T-cell (primary cell): ENCODE measurements at regions of chr4 and their contacts with region 1.

Region 1: GRCh38 chr4:40283968-40284367 is 51.2 kb upstream of the CHRNA9 start:
- DNase-seq: peak in 34 of 35 experiments; percentile 62 to 89 (median 74)
- ATAC-seq: peak; percentile 97 to 99 (median 98)
- H3K4me3 ChIP-seq: peak overlapping the region in 1 of 2 donors; percentile 5
- H3K4me3 Mint-ChIP-seq: peak overlapping the region in 2 of 3 donors; percentile 43 to 78
- H3K27ac ChIP-seq: peak overlapping the region; percentile 90
- H3K27ac Mint-ChIP-seq: peak overlapping the region; percentile 89 to 94
- H3K4me1 ChIP-seq: peaks cover 20 to 58% of the 10 kb centered on the region in 2 experiments
- H3K4me1 Mint-ChIP-seq: peaks cover 57 to 73% (median 70%) of the 10 kb centered on the region in 3 donors
- H3K27me3 ChIP-seq: no peaks in the 10 kb centered on the region
- H3K27me3 Mint-ChIP-seq: no peaks in the 10 kb centered on the region

Region 2: GRCh38 chr4:40178672-40179071 is 105.3 kb before region 1 on chr4:
- CTCF ChIA-PET with region 1: no interaction called
- POLR2A ChIA-PET with region 1: no interaction called
- DNase-seq: no peak
- ATAC-seq: no peak
- H3K4me3 ChIP-seq: no peak overlapping the region
- H3K4me3 Mint-ChIP-seq: no peak overlapping the region
- H3K27ac ChIP-seq: no peak overlapping the region
- H3K27ac Mint-ChIP-seq: peak overlapping the region in 1 of 2 donors; percentile 79
- H3K4me1 ChIP-seq: peaks cover under 1 to 7% of the 10 kb centered on the region in 2 experiments
- H3K4me1 Mint-ChIP-seq: peaks cover 24 to 31% (median 29%) of the 10 kb centered on the region in 3 donors
- H3K27me3 ChIP-seq: no peaks in the 10 kb centered on the region
- H3K27me3 Mint-ChIP-seq: no peaks in the 10 kb centered on the region

Region 3: DNA sequence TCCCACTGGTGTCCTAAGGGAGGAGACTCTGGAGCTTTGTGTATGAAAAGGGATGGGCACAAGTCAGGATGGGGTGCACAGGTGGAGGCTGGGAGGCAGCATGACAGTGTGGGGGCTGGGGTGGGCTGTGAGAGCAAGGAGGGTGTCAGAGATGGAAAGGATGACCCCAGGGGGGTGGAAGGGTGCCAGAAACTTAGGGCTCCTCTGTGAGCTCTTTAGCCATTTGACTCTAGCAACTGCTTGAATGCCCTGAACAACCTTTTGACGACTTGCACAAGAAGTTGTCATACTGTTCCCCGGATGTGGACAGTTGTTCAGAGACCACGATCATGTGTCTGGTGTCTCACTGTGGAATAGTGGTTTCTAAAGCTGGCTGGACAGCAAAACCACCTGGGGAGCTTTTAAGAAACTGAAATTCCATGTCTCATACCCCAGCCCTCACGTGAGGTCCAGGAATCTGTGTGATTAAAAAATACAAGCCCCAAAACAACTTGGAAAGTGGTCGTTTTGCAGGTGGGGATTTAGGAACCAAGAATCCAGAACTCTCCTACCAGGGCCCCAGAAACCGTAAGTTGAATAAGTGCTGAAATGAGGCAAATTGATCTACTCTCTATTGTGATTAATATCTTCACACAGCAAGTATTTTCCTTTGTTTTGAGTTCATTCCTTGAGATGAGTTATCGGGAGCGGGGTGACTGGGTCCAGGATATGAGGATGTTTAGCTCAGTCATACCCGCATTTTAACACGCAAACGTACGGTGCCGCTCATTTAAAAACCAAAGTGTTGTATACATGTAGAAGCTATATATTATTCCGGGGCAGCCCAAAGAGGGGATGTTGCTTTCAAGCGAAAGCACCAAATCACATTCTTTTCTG is 83.7 kb before region 1 on chr4:
- CTCF ChIA-PET with region 1: interaction called in 1 of 2 experiments, 3 read pairs
- POLR2A ChIA-PET with region 1: interaction called, 6 to 12 read pairs
- DNase-seq: peak in 24 of 35 experiments; percentile 39 to 78 (median 49)
- ATAC-seq: peak; percentile 16 to 43 (median 35)
- H3K4me3 ChIP-seq: peak overlapping the region; percentile 87 to 96
- H3K4me3 Mint-ChIP-seq: peak overlapping the region; percentile 96 to 99 (median 98)
- H3K27ac ChIP-seq: peak overlapping the region; percentile 99
- H3K27ac Mint-ChIP-seq: peak overlapping the region; percentile 95 to 96
- H3K4me1 ChIP-seq: peaks cover 33 to 48% of the 10 kb centered on the region in 2 experiments
- H3K4me1 Mint-ChIP-seq: peaks cover 40 to 58% (median 52%) of the 10 kb centered on the region in 3 donors
- H3K27me3 ChIP-seq: no peaks in the 10 kb centered on the region
- H3K27me3 Mint-ChIP-seq: no peaks in the 10 kb centered on the region

Region 4: DNA sequence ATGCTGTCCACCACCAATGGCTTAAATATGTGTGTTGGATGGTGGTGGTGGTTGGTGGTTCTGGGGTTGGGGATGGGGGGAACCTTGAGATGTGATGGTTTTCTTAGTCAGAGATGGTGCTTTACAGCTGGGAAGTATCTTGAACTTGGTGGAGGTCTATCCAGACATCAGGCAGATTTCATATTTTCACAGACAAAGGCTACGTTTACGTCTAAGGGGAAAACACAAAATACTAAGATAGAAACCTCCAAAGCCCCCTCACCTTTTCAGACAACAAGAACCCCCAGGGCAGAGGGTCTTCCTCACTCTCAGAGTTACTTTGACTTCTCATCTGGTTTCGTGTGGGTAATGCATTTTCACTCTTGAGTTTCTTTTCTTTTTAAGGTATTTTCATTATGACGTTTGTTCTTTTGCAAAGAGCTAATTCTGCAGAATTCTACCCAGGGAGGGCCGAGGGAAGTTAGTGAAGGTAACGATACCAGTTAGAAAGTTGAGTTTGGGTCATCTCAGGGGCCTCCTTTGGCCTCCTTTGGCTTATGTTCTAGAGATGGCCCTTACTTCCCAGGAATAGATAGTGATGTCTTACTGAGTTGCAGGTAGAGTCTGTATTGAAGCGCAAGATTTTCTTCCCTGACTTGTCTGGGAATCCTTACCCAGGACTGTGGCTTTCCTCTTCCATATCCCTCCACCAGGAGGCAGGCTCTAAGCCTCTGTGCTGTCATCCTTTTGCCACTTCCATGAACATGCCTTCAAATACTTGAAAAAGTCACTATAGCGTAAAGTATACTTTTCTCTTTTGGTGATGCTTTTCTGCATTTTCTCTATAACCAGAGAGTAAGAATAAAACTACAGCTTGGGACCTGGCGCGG is 55.2 kb before region 1 on chr4:
- CTCF ChIA-PET with region 1: interaction called, 4 to 16 read pairs
- POLR2A ChIA-PET with region 1: no interaction called
- DNase-seq: peak in 1 of 35 experiments; percentile 52
- ATAC-seq: no peak
- H3K4me3 ChIP-seq: peak overlapping the region; percentile 15 to 19
- H3K4me3 Mint-ChIP-seq: peak overlapping the region; percentile 68 to 83 (median 76)
- H3K27ac ChIP-seq: peak overlapping the region; percentile 87
- H3K27ac Mint-ChIP-seq: peak overlapping the region; percentile 97 to 99
- H3K4me1 ChIP-seq: peaks cover 76 to 90% of the 10 kb centered on the region in 2 experiments
- H3K4me1 Mint-ChIP-seq: peaks cover 91 to 94% (median 91%) of the 10 kb centered on the region in 3 donors
- H3K27me3 ChIP-seq: no peaks in the 10 kb centered on the region
- H3K27me3 Mint-ChIP-seq: no peaks in the 10 kb centered on the region

Region 5: GRCh38 chr4:40238700-40239548 is 45.0 kb before region 1 on chr4:
- CTCF ChIA-PET with region 1: interaction called in 1 of 2 experiments, 10 read pairs
- POLR2A ChIA-PET with region 1: interaction called in 1 of 2 experiments, 7 read pairs
- DNase-seq: peak in 34 of 35 experiments; percentile 56 to 92 (median 79)
- ATAC-seq: peak; percentile 86 to 94 (median 92)
- H3K4me3 ChIP-seq: peak overlapping the region; percentile 28 to 29
- H3K4me3 Mint-ChIP-seq: peak overlapping the region; percentile 67 to 76 (median 73)
- H3K27ac ChIP-seq: peak overlapping the region; percentile 97
- H3K27ac Mint-ChIP-seq: peak overlapping the region; percentile 93 to 95
- H3K4me1 ChIP-seq: peaks cover 67 to 99% of the 10 kb centered on the region in 2 experiments
- H3K4me1 Mint-ChIP-seq: peaks cover 91 to 95% (median 94%) of the 10 kb centered on the region in 3 donors
- H3K27me3 ChIP-seq: no peaks in the 10 kb centered on the region
- H3K27me3 Mint-ChIP-seq: no peaks in the 10 kb centered on the region

Region 6: DNA sequence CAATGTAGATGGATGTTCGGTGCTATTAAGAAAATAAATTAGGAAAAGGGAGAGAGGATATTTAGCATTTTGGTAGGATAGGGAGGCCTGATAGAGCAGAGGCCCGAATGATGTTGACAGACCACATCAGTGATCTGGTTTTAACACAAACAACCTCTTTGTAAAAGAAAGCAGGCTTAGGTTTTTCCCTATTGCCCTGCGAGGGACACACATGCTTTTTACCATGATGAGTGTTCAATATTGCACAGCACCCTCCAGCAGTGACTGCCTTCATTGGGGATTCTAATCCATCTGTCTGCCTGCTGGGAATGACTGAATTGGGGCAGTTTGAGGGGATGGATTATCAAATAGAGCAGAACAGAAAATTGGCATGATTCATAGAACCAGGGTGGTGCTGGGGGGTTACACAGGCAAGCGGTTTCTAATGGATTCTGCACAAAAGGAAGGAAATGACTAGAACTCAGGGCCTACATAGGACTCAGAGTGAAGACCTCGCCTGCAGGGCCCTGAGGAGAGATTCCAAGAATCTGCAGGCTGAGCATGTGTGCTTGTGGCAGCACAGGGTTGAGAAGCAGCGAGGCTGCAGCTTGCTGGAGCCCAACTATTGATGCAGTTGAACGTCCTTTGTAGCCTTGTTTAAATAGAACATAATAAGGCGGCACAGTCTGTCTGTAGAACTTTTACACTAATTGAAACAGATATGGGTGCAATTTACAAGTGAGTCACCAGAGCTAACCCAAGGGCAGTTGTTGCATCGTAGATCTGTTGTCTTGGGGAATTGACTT is 29.2 kb before region 1 on chr4:
- CTCF ChIA-PET with region 1: interaction called, 8 to 10 read pairs
- POLR2A ChIA-PET with region 1: interaction called in 1 of 2 experiments, 3 read pairs
- DNase-seq: peak in 1 of 35 experiments; percentile 39
- ATAC-seq: peak; percentile 31 to 63 (median 57)
- H3K4me3 ChIP-seq: no peak overlapping the region
- H3K4me3 Mint-ChIP-seq: peak overlapping the region; percentile 1 to 57 (median 55)
- H3K27ac ChIP-seq: peak overlapping the region; percentile 52
- H3K27ac Mint-ChIP-seq: peak overlapping the region; percentile 82 to 97
- H3K4me1 ChIP-seq: peaks cover 43 to 70% of the 10 kb centered on the region in 2 experiments
- H3K4me1 Mint-ChIP-seq: peaks cover 76 to 87% (median 77%) of the 10 kb centered on the region in 3 donors
- H3K27me3 ChIP-seq: no peaks in the 10 kb centered on the region
- H3K27me3 Mint-ChIP-seq: no peaks in the 10 kb centered on the region

Region 7: GRCh38 chr4:40325189-40326019 is 41.4 kb after region 1 on chr4:
- CTCF ChIA-PET with region 1: interaction called, 3 to 11 read pairs
- POLR2A ChIA-PET with region 1: interaction called, 3 to 10 read pairs
- DNase-seq: peak in 33 of 35 experiments; percentile 43 to 87 (median 65)
- ATAC-seq: peak; percentile 96 to 98 (median 97)
- H3K4me3 ChIP-seq: no peak overlapping the region
- H3K4me3 Mint-ChIP-seq: no peak overlapping the region
- H3K27ac ChIP-seq: no peak overlapping the region
- H3K27ac Mint-ChIP-seq: peak overlapping the region; percentile 9 to 14
- H3K4me1 ChIP-seq: peaks cover 4 to 9% of the 10 kb centered on the region in 2 experiments
- H3K4me1 Mint-ChIP-seq: peaks cover 21 to 31% (median 21%) of the 10 kb centered on the region in 3 donors
- H3K27me3 ChIP-seq: no peaks in the 10 kb centered on the region
- H3K27me3 Mint-ChIP-seq: peaks cover 0 to 4% of the 10 kb centered on the region in 2 donors

Region 8: DNA sequence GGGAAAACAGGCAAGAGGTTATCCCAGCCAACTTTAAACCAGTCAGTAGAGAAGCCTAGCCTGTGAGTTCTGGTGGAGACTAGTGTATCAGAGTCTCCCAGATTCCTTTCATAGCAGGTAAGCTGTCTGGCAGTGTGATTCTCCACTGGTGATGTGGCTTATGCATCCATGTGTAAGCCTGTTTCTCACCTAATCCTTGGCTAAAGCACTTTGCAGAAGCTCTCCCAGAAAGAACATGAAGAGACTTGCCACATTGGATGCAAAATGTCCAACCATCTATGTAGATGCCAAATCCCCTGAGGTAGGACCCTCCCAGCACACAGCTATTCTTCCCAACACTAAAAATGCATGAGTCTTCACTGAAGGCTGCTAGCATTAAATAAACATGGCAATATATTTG is 162.9 kb after region 1 on chr4:
- CTCF ChIA-PET with region 1: interaction called in 1 of 2 experiments, 10 read pairs
- POLR2A ChIA-PET with region 1: no interaction called
- DNase-seq: no peak
- ATAC-seq: no peak
- H3K4me3 ChIP-seq: no peak overlapping the region
- H3K4me3 Mint-ChIP-seq: no peak overlapping the region
- H3K27ac ChIP-seq: no peak overlapping the region
- H3K27ac Mint-ChIP-seq: no peak overlapping the region
- H3K4me1 ChIP-seq: peaks cover 0 to under 1% of the 10 kb centered on the region in 2 experiments
- H3K4me1 Mint-ChIP-seq: peaks cover 3 to 17% (median 13%) of the 10 kb centered on the region in 3 donors
- H3K27me3 ChIP-seq: no peaks in the 10 kb centered on the region
- H3K27me3 Mint-ChIP-seq: no peaks in the 10 kb centered on the region